ENCODE measurements at regions of chr6 and their contacts with region 1.

Region 1: DNA sequence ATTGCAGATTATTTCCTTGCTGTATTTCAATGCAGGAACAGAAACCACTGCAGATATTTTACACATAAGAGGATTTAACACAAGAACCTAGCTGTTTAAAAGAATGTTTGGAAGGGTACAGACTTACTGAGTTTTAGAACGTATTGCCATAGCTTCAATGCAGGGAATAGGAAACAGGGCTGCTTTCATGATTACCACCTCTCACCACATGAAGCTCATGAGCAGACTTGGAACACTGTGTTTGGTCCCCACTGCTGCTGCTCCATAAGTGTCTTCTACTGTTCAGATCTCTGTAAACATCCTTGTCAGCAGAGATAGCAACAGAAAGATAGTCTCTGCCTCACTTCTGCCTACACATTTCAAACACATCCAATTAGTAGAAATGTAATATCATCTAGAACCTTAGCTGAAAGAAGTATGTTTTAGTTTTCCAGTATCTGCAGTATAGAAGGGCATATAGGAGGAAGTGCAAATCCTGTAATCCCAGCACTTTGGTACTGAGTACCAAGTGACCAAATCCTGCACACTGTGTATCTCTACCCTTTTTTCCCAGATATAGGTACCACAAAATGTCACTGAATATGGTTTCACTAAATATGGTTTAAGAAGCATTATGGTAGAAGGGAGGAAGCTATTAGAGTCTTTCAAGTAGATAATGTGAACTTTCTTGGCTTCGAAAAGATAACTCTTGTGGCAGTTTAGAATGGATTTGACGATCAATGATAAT is 51.9 kb downstream of the STXBP5 start:
- DNase-seq: peak in 1 of 4 experiments; percentile 12
- ATAC-seq: peak; percentile 74
- H3K4me3 ChIP-seq: no peak overlapping the region
- H3K27ac ChIP-seq: no peak overlapping the region
- H3K4me1 ChIP-seq: no peaks in the 10 kb centered on the region
- H3K27me3 ChIP-seq: no peaks in the 10 kb centered on the region
- CTCF ChIP-seq: no peak
- EP300 ChIP-seq: no peak
- POLR2A ChIP-seq: no peak
- RAD21 ChIP-seq: no peak

Region 2: DNA sequence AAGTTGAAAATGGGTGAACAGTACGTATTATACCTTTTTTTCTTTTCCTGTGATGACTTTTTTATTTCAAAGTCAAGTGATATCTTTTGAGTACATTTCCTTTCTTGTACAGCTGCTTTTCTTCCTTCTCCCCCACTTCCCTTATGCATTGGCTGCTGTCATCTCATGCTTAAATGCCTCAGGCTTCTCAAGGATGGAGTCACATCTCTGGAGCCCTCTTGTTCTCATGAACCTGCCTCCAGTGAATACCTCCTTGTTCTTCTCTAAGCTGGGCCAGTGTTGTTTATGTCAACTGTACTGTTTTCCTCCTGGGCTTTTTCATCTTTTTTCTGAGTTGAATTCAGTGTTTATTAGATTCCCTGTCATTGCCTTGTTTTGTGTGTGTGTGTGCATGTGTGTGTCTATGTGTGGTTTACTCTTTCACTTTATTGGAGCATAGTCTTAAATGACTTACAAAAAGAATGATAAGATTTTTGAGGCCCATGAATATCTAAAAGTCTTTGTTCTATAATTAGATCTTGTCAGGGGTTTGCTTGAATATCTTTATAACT is 28.3 kb before region 1 on chr6:
- CTCF ChIA-PET with region 1: no interaction called
- POLR2A ChIA-PET with region 1: no interaction called
- in situ Hi-C with region 1: no loop called
- intact Hi-C with region 1: no loop called
- DNase-seq: peak in 1 of 4 experiments; percentile 31
- ATAC-seq: peak; percentile 52
- H3K4me3 ChIP-seq: no peak overlapping the region
- H3K27ac ChIP-seq: peak overlapping the region; percentile 0; the same call in 1 of the 3 replicates
- H3K4me1 ChIP-seq: peaks cover 0 to 18% of the 10 kb centered on the region in 2 experiments; a peak in 3 of 5 replicates
- H3K27me3 ChIP-seq: no peaks in the 10 kb centered on the region
- CTCF ChIP-seq: no peak
- EP300 ChIP-seq: no peak
- POLR2A ChIP-seq: 0 out of 2 replicates have a peak, but pooled peaks have one; percentile 38
- RAD21 ChIP-seq: no peak

Region 3: GRCh38 chr6:147268254-147268653 is 12.1 kb after region 1 on chr6:
- CTCF ChIA-PET with region 1: no interaction called
- POLR2A ChIA-PET with region 1: interaction called, 11 read pairs
- in situ Hi-C with region 1: no loop called
- intact Hi-C with region 1: no loop called
- DNase-seq: no peak
- ATAC-seq: no peak
- H3K4me3 ChIP-seq: no peak overlapping the region
- H3K27ac ChIP-seq: no peak overlapping the region
- H3K4me1 ChIP-seq: no peaks in the 10 kb centered on the region
- H3K27me3 ChIP-seq: no peaks in the 10 kb centered on the region
- CTCF ChIP-seq: no peak
- EP300 ChIP-seq: no peak
- POLR2A ChIP-seq: no peak
- RAD21 ChIP-seq: no peak